HCT116 (cell line): ENCODE measurements at regions of chr3 and their contacts with region 1.

Region 1: DNA sequence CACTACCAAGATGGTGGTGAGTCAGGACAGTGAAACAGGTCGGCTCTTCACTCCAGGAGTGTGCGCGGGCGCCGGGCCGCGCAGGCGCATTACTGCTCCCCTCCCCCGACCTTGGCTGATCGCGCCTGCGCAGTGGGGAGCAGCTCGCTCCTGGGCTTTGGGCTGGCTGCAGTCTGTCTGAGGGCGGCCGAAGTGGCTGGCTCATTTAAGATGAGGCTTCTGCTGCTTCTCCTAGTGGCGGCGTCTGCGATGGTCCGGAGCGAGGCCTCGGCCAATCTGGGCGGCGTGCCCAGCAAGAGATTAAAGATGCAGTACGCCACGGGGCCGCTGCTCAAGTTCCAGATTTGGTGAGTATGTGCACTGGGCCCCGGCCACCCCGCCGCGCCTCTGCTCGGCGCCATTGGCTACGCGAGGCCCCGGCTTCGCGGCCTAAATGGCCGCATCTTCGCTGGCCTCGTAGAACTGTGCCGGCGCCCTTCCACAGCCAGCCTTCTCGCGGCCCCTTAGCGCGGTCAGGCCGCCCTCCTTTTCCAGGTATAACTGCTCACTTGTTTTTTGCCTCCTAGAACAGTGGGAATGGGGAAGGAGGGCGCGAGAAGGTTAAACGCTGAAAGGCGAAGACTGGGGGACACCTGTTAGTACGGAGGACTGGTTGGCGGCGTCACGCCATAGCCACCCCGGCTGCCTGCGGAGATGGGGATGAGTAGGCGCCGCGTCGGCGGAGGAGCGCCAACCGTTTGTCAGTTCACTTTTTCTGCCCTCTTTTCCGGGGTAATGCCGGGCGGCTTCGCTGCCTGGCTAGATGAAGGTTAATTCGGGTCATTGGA is at the start of gene SELENOT:
- DNase-seq: peak; percentile 92
- ATAC-seq: peak; percentile 86
- H3K4me3 ChIP-seq: peak within 1 kb of the TSS; percentile 91
- H3K27ac ChIP-seq: peak within 1 kb of the TSS; percentile 90
- H3K4me1 ChIP-seq: peaks cover 15 to 40% of the 10 kb centered on the region in 2 experiments
- H3K27me3 ChIP-seq: no peaks in the 10 kb centered on the region
- CTCF ChIP-seq: no peak; a peak in 2 of 6 replicates
- POLR2A ChIP-seq: peak; percentile 99
- RAD21 ChIP-seq: no peak
- total RNA-seq, gene SELENOT: 81.6 TPM

Region 2: DNA sequence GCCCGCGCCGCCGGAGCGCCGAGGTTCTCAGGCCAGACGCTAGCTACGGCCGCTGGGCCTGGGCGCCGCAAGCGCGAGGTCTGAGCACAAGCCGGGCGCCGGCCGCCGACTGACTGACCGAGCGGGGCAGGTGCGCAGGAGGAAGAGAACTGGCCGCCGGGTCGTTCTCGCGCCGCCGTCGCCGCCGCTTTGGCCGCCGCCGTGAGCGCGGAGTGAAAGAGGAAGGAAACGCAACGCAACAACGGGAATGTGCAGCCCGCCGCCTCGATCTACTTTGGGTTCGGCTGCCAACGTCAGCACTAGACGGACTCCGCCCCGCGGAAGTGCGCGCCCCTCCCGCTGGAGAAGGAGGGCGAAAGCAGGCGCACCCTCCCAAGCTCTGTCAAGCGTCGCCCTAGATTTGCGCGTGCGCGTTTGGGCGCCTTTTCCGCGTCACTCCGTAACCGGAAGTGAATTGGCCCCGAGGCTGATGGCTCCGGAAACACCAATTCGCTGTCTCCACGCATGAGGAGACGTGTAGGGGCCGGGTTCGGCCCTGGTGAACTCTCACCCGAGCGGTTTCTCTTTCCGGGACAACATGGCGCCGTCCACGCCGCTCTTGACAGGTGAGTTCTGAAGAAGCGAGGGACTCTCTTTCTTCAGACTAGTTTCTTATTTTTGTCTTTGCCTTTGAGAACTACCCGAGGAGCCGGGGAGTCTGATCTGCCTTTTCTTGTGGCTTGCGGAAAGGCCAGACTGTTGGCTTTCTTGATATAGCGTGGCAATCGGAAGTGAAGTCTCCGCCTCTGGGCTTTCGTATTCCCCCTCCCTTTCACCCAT is 56.9 kb before region 1 on chr3 and contains the starts of genes EIF2A and SERP1:
- CTCF ChIA-PET with region 1: no interaction called
- POLR2A ChIA-PET with region 1: interaction called, 4 read pairs
- RAD21 ChIA-PET with region 1: no interaction called
- intact Hi-C with region 1: loop called (anchors 5 kb)
- DNase-seq: peak; percentile 98
- ATAC-seq: peak; percentile 91
- H3K4me3 ChIP-seq: peak within 1 kb of the TSS; percentile 94 to 96
- H3K27ac ChIP-seq: peak within 1 kb of the TSS; percentile 90
- H3K4me1 ChIP-seq: peaks cover 5 to 20% of the 10 kb centered on the region in 2 experiments
- H3K27me3 ChIP-seq: no peaks in the 10 kb centered on the region
- CTCF ChIP-seq: no peak
- POLR2A ChIP-seq: peak; percentile 82
- RAD21 ChIP-seq: no peak
- total RNA-seq, gene EIF2A: 126 TPM
- total RNA-seq, gene SERP1: 69.1 TPM

Region 3: GRCh38 chr3:150589759-150590158 is 13.6 kb before region 1 on chr3:
- CTCF ChIA-PET with region 1: no interaction called
- POLR2A ChIA-PET with region 1: interaction called, 19 read pairs
- RAD21 ChIA-PET with region 1: no interaction called
- intact Hi-C with region 1: no loop called
- DNase-seq: no peak
- ATAC-seq: no peak
- H3K4me3 ChIP-seq: no peak overlapping the region
- H3K27ac ChIP-seq: no peak overlapping the region
- H3K4me1 ChIP-seq: no peaks in the 10 kb centered on the region
- H3K27me3 ChIP-seq: no peaks in the 10 kb centered on the region
- CTCF ChIP-seq: no peak
- POLR2A ChIP-seq: no peak
- RAD21 ChIP-seq: no peak

Region 4: GRCh38 chr3:150763122-150763841 is 159.9 kb after region 1 on chr3 and contains the start of gene SIAH2:
- CTCF ChIA-PET with region 1: no interaction called
- POLR2A ChIA-PET with region 1: interaction called, 3 read pairs
- RAD21 ChIA-PET with region 1: no interaction called
- intact Hi-C with region 1: loop called (anchors 5 kb)
- DNase-seq: peak; percentile 89
- ATAC-seq: peak; percentile 81
- H3K4me3 ChIP-seq: peak within 1 kb of the TSS; percentile 72 to 91
- H3K27ac ChIP-seq: peak within 1 kb of the TSS; percentile 92
- H3K4me1 ChIP-seq: peaks cover 31 to 54% of the 10 kb centered on the region in 2 experiments
- H3K27me3 ChIP-seq: no peaks in the 10 kb centered on the region
- CTCF ChIP-seq: no peak
- POLR2A ChIP-seq: peak; percentile 75
- RAD21 ChIP-seq: no peak
- total RNA-seq, gene SIAH2: 39.9 TPM